T-cell (primary cell): ENCODE measurements at regions of chr1 and their contacts with region 1.

Region 1: GRCh38 chr1:155250633-155251449 is 4.4 kb downstream of the ENTREP3 start:
- DNase-seq: peak; percentile 84 to 99 (median 93)
- ATAC-seq: peak; percentile 92 to 96 (median 95)
- H3K4me3 ChIP-seq: peak overlapping the region; percentile 57 to 63
- H3K4me3 Mint-ChIP-seq: peak overlapping the region; percentile 54 to 63 (median 59)
- H3K27ac ChIP-seq: no peak overlapping the region
- H3K27ac Mint-ChIP-seq: peak overlapping the region; percentile 5 to 64
- H3K4me1 ChIP-seq: peaks cover 9 to 34% of the 10 kb centered on the region in 2 experiments
- H3K4me1 Mint-ChIP-seq: peaks cover 29 to 33% (median 30%) of the 10 kb centered on the region in 3 donors
- H3K27me3 ChIP-seq: no peaks in the 10 kb centered on the region
- H3K27me3 Mint-ChIP-seq: no peaks in the 10 kb centered on the region

Region 2: GRCh38 chr1:155261852-155262673 is 11.2 kb after region 1 on chr1 and contains the start of gene SCAMP3:
- CTCF ChIA-PET with region 1: interaction called, 10 to 22 read pairs
- POLR2A ChIA-PET with region 1: interaction called, 3 read pairs
- DNase-seq: peak; percentile 61 to 93 (median 78)
- ATAC-seq: peak; percentile 96 to 99 (median 98)
- H3K4me3 ChIP-seq: peak within 1 kb of the TSS; percentile 98 to 99
- H3K4me3 Mint-ChIP-seq: peak within 1 kb of the TSS; percentile 98 to 100 (median 99)
- H3K27ac ChIP-seq: peak within 1 kb of the TSS; percentile 70
- H3K27ac Mint-ChIP-seq: peak within 1 kb of the TSS; percentile 96 to 98
- H3K4me1 ChIP-seq: peaks cover 12 to 30% of the 10 kb centered on the region in 2 experiments
- H3K4me1 Mint-ChIP-seq: peaks cover 33 to 40% (median 38%) of the 10 kb centered on the region in 3 donors
- H3K27me3 ChIP-seq: no peaks in the 10 kb centered on the region
- H3K27me3 Mint-ChIP-seq: no peaks in the 10 kb centered on the region
- total RNA-seq, gene SCAMP3: 54.7 to 101 (median 97.4) TPM

Region 3: DNA sequence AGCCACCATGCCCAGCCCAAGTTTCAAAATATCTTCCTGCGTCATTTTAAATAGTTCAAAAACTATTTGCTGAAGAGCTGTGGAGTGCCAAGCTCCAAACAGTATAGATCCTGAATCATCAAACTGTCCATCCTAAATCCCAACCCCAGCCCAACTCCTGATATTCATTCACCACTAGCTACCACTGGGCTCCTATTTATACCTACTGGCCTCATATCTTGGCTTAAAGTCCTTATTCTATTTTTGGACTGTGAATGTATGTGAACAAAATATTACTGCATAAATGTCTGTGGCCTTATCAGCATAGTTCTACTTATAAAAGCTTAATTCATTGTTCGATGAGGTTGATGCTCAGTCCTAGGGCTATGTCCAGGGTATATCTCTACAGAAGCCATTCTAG is 16.5 kb after region 1 on chr1:
- CTCF ChIA-PET with region 1: interaction called, 5 to 22 read pairs
- POLR2A ChIA-PET with region 1: interaction called, 3 read pairs
- DNase-seq: no peak
- ATAC-seq: no peak
- H3K4me3 ChIP-seq: no peak overlapping the region
- H3K4me3 Mint-ChIP-seq: no peak overlapping the region
- H3K27ac ChIP-seq: no peak overlapping the region
- H3K27ac Mint-ChIP-seq: no peak overlapping the region
- H3K4me1 ChIP-seq: peaks cover 0 to 16% of the 10 kb centered on the region in 2 experiments
- H3K4me1 Mint-ChIP-seq: peaks cover 24 to 34% (median 25%) of the 10 kb centered on the region in 3 donors
- H3K27me3 ChIP-seq: no peaks in the 10 kb centered on the region
- H3K27me3 Mint-ChIP-seq: no peaks in the 10 kb centered on the region

Region 4: GRCh38 chr1:155277070-155277895 is 26.4 kb after region 1 on chr1 and contains the start of gene HCN3:
- CTCF ChIA-PET with region 1: interaction called, 3 to 12 read pairs
- POLR2A ChIA-PET with region 1: no interaction called
- DNase-seq: peak; percentile 50 to 95 (median 70)
- ATAC-seq: peak; percentile 54 to 65 (median 62)
- H3K4me3 ChIP-seq: peak within 1 kb of the TSS; percentile 49 to 68
- H3K4me3 Mint-ChIP-seq: peak within 1 kb of the TSS; percentile 69 to 70 (median 69)
- H3K27ac ChIP-seq: peak within 1 kb of the TSS; percentile 44
- H3K27ac Mint-ChIP-seq: peak within 1 kb of the TSS in 1 of 2 donors; percentile 31
- H3K4me1 ChIP-seq: peaks cover 23 to 41% of the 10 kb centered on the region in 2 experiments
- H3K4me1 Mint-ChIP-seq: peaks cover 32 to 41% (median 35%) of the 10 kb centered on the region in 3 donors
- H3K27me3 ChIP-seq: no peaks in the 10 kb centered on the region
- H3K27me3 Mint-ChIP-seq: no peaks in the 10 kb centered on the region
- total RNA-seq, gene HCN3: 1.7 to 4.1 (median 4.0) TPM

Region 5: DNA sequence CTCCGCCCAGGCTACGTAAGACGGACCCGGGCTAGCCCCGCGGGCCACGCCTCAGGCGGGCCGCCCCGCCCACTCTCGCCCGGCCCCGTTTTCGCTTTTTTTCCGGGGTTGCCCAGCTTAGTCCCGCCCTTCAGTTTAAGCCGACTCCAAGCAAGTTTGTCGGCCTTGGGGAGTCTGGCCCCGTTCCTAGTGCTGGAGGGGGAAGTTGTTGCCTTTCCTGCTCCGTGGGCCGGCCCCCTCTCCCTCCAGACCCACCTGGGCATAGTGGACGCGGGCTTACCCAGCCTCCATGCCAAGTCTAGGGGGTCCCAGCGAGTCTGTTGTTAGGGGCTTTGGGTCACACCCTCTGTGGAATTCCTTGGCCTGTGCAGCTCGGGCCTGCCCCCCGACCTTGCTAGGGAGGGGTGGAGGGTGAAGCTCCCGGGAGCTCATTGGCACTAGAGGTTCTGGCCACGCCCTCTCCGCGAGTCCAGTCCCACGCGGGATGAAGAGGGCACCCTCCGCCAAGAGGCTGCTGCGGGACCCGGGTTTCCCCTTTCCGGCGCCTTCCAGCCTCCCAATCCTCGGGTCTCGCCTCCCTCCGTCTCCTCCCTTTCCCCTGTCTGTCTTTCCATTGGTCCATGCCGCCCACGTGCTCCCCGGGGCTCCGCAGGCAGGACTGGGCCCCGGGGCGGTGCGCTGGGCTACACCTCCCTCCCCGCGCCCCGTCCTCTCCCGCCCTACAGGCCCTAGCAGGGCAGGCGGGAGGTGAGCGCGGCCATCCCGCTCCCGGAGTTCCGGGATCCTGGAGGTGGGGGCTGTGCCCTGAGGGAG is 73.2 kb after region 1 on chr1:
- CTCF ChIA-PET with region 1: interaction called, 9 to 62 read pairs
- POLR2A ChIA-PET with region 1: interaction called in 1 of 2 experiments, 3 read pairs
- DNase-seq: peak; percentile 65 to 94 (median 81)
- ATAC-seq: peak; percentile 82 to 84 (median 84)
- H3K4me3 ChIP-seq: peak overlapping the region; percentile 95 to 97
- H3K4me3 Mint-ChIP-seq: peak overlapping the region; percentile 80 to 89 (median 85)
- H3K27ac ChIP-seq: peak overlapping the region; percentile 89
- H3K27ac Mint-ChIP-seq: peak overlapping the region; percentile 76 to 85
- H3K4me1 ChIP-seq: peaks cover 5 to 45% of the 10 kb centered on the region in 2 experiments
- H3K4me1 Mint-ChIP-seq: peaks cover 32 to 39% (median 34%) of the 10 kb centered on the region in 3 donors
- H3K27me3 ChIP-seq: peaks cover 0 to 2% of the 10 kb centered on the region in 2 experiments
- H3K27me3 Mint-ChIP-seq: no peaks in the 10 kb centered on the region

Region 6: GRCh38 chr1:155717041-155717440 is 466.2 kb after region 1 on chr1:
- CTCF ChIA-PET with region 1: interaction called in 1 of 2 experiments, 11 read pairs
- POLR2A ChIA-PET with region 1: no interaction called
- DNase-seq: no peak
- ATAC-seq: no peak
- H3K4me3 ChIP-seq: no peak overlapping the region
- H3K4me3 Mint-ChIP-seq: no peak overlapping the region
- H3K27ac ChIP-seq: no peak overlapping the region
- H3K27ac Mint-ChIP-seq: peak overlapping the region; percentile 23 to 41
- H3K4me1 ChIP-seq: no peaks in the 10 kb centered on the region
- H3K4me1 Mint-ChIP-seq: peaks cover 0 to 15% (median 10%) of the 10 kb centered on the region in 3 donors
- H3K27me3 ChIP-seq: no peaks in the 10 kb centered on the region
- H3K27me3 Mint-ChIP-seq: no peaks in the 10 kb centered on the region